Activated CD4-positive, alpha-beta T cell treated with anti-CD3 and anti-CD28 coated beads for 36 hours (primary cell): ENCODE measurements at regions of chr4 and their contacts with region 1.

Region 1: DNA sequence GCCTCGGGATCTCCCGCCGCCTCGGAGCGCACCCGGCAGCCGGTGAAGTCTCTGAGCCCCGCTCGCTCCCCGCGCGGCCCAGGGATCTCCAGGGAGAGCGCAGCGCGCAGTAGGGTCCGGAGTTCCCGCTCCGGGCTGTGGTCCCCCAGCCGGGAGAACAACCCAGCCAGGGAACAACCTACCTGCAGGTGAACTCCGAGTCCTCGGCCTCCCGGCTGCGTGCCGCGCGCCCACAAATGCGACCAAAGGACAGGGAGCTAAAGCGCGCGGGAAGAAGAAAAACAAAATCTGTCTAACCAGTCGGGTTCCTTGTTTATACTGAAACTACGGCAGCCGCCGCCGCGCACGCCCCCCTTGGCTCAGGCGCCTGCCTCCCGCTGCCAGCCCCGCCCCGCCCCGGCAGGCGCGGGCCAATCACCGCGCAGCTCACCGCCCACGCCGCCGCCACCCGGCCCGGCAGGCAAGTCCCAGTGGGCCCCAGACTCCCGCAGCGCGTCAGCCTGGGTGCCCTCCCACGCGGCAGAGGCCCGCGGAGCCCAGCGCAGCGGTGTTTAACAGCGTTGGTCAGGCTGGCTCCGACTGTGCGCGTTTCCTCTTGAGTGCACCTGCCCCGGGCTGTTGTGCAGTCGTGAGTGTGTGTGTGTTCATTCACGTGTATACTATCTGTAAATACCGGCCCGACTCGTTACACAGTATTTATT is at the start of gene RASGEF1B:
- DNase-seq: peak; percentile 97
- ATAC-seq: peak; percentile 93
- H3K4me3 Mint-ChIP-seq: peak within 1 kb of the TSS; percentile 86
- H3K27ac Mint-ChIP-seq: peak within 1 kb of the TSS; percentile 88
- H3K4me1 Mint-ChIP-seq: peaks cover 38% of the 10 kb centered on the region
- H3K27me3 Mint-ChIP-seq: no peaks in the 10 kb centered on the region
- total RNA-seq, gene RASGEF1B: 3.4 to 4.0 TPM

Region 2: DNA sequence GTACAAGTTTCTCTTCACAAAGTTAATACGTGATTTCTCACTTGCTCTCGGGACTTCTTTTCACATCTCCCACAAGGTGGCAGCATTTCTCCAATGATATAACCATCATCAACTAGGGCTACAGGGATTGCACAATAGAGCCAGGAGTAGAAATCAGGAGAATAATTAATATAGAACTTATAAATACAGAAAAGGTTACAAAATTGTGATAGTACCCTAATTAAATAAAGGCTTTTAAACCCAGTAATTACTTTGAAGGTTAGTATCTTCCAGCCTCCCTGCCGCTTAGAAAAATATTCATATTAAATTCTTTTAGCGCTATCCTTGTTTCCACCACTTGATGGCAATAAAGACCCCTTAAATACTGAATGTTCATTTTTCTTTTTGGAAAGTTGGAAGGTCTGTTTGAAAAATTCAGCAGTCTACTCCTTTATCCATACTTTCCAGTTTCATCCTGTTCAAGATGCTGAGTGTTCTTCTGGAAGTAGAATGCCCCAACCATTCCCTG is 65.8 kb before region 1 on chr4:
- CTCF ChIA-PET with region 1: interaction called, 4 read pairs
- POLR2A ChIA-PET with region 1: no interaction called
- intact Hi-C with region 1: loop called (anchors 1 to 5 kb)
- DNase-seq: peak; percentile 36
- ATAC-seq: peak; percentile 78
- H3K4me3 Mint-ChIP-seq: no peak overlapping the region
- H3K27ac Mint-ChIP-seq: no peak overlapping the region
- H3K4me1 Mint-ChIP-seq: peaks cover 3% of the 10 kb centered on the region
- H3K27me3 Mint-ChIP-seq: no peaks in the 10 kb centered on the region

Region 3: GRCh38 chr4:81505004-81505598 is 33.4 kb after region 1 on chr4:
- CTCF ChIA-PET with region 1: interaction called, 5 read pairs
- POLR2A ChIA-PET with region 1: no interaction called
- intact Hi-C with region 1: loop called in 1 of 2 experiments (anchors 5 kb)
- DNase-seq: peak; percentile 83
- ATAC-seq: peak; percentile 80
- H3K4me3 Mint-ChIP-seq: peak overlapping the region; percentile 18
- H3K27ac Mint-ChIP-seq: peak overlapping the region; percentile 35
- H3K4me1 Mint-ChIP-seq: peaks cover 40% of the 10 kb centered on the region
- H3K27me3 Mint-ChIP-seq: no peaks in the 10 kb centered on the region

Region 4: DNA sequence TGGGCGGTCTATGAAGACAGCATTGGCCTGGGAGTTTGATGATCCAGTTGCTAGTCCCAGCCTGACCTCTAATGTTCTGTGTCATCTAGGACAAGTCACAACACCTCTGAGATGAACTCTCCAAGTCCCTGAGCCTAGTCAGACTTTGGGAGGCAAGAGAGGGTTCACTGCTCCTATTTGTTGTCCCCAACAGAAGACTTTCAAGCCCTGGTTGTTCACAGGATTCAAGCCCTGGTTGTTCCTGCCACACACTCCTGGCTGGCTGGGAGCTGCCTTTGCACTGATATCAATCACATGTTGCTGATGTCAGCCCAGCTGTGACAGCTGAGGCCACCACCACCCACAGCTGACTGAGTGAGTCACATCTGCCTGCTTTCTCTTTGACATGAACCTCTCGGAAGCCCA is 253.2 kb after region 1 on chr4:
- CTCF ChIA-PET with region 1: interaction called, 5 read pairs
- POLR2A ChIA-PET with region 1: no interaction called
- intact Hi-C with region 1: loop called (anchors 2 kb)
- DNase-seq: peak; percentile 85
- ATAC-seq: peak; percentile 100
- H3K4me3 Mint-ChIP-seq: no peak overlapping the region
- H3K27ac Mint-ChIP-seq: no peak overlapping the region
- H3K4me1 Mint-ChIP-seq: peaks cover 17% of the 10 kb centered on the region
- H3K27me3 Mint-ChIP-seq: peaks cover 3% of the 10 kb centered on the region

Region 5: DNA sequence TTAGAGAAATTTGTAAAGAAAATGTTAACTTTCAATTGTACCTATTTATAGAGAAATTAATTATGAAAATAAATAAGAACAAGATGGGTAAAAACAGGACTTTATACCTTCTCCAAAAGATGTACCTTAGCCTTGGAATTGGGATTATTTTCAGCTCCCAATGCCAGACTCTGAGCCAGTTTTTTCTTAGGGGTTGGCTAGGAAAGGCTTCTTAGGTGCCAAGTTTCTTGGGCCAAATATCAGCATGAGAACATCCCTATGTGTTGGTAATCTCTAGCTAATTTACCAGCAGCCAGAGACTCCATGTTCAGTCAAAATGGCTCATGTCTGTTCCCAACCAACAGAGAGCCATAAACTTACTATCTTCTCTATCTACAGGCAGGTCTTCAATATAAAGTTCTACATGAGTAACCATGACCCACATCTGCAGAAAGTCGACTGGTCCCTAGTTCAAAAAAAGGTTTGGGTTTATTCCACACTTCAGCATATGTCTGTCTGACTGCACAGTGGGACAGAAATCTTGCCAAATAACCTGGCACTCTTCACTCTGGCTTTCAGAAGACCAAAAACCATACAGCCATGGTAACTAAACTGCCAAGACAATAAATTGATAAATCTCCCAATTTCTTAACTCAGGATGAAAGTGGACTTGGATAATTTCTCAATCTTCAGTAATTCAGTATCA is 380.4 kb after region 1 on chr4:
- CTCF ChIA-PET with region 1: interaction called, 13 read pairs
- POLR2A ChIA-PET with region 1: interaction called, 4 read pairs
- intact Hi-C with region 1: no loop called
- DNase-seq: no peak
- ATAC-seq: no peak
- H3K4me3 Mint-ChIP-seq: no peak overlapping the region
- H3K27ac Mint-ChIP-seq: no peak overlapping the region
- H3K4me1 Mint-ChIP-seq: peaks cover 12% of the 10 kb centered on the region
- H3K27me3 Mint-ChIP-seq: no peaks in the 10 kb centered on the region

Region 6: GRCh38 chr4:82268050-82268825 is 796.5 kb after region 1 on chr4:
- CTCF ChIA-PET with region 1: interaction called, 4 read pairs
- POLR2A ChIA-PET with region 1: no interaction called
- intact Hi-C with region 1: loop called (anchors 2 kb)
- DNase-seq: peak; percentile 68
- ATAC-seq: peak; percentile 97
- H3K4me3 Mint-ChIP-seq: no peak overlapping the region
- H3K27ac Mint-ChIP-seq: no peak overlapping the region
- H3K4me1 Mint-ChIP-seq: peaks cover 22% of the 10 kb centered on the region
- H3K27me3 Mint-ChIP-seq: no peaks in the 10 kb centered on the region

Region 7: GRCh38 chr4:82428969-82429727 is 957.4 kb after region 1 on chr4:
- CTCF ChIA-PET with region 1: no interaction called
- POLR2A ChIA-PET with region 1: interaction called, 3 read pairs
- intact Hi-C with region 1: loop called in 1 of 2 experiments (anchors 2 kb)
- DNase-seq: peak; percentile 96
- ATAC-seq: peak; percentile 55
- H3K4me3 Mint-ChIP-seq: peak overlapping the region; percentile 94
- H3K27ac Mint-ChIP-seq: peak overlapping the region; percentile 99
- H3K4me1 Mint-ChIP-seq: peaks cover 50% of the 10 kb centered on the region
- H3K27me3 Mint-ChIP-seq: no peaks in the 10 kb centered on the region